AG04450 (cell line): ENCODE measurements at regions of chr7 and their contacts with region 1.

Region 1: GRCh38 chr7:97027427-97028234 is 3.0 kb upstream of the DLX5 start:
- DNase-seq: peak; percentile 69
- H3K4me3 ChIP-seq: peak overlapping the region; percentile 46
- H3K27ac ChIP-seq: no peak overlapping the region
- H3K27me3 ChIP-seq: peaks cover 48% of the 10 kb centered on the region
- CTCF ChIP-seq: peak; percentile 90

Region 2: GRCh38 chr7:96075510-96076349 is 951.9 kb before region 1 on chr7:
- CTCF ChIA-PET with region 1: interaction called, 24 read pairs
- POLR2A ChIA-PET with region 1: no interaction called
- DNase-seq: peak; percentile 27
- H3K4me3 ChIP-seq: peak overlapping the region; percentile 64
- H3K27ac ChIP-seq: no peak overlapping the region
- H3K27me3 ChIP-seq: peaks cover 2% of the 10 kb centered on the region
- CTCF ChIP-seq: peak; percentile 97

Region 3: DNA sequence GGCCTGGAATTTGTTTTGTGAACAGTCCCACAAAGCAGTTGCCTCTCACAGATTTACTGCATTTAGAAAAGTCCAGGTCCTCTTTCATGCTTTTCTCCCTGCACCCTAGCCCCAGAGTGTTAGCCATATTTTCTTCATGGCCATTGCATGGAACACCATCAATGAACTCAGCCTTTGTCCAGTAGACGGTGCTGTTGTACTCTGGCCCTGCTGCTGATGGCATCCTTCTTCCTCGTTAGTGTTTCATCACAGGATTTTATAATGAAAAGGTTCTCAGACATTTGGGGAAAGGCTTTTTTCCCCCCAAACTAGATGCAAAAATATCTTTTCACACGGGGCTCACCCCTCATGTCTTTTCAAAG is 612.7 kb before region 1 on chr7:
- CTCF ChIA-PET with region 1: interaction called, 14 read pairs
- POLR2A ChIA-PET with region 1: no interaction called
- DNase-seq: no peak
- H3K4me3 ChIP-seq: no peak overlapping the region
- H3K27ac ChIP-seq: no peak overlapping the region
- H3K27me3 ChIP-seq: peaks cover 6% of the 10 kb centered on the region
- CTCF ChIP-seq: peak; percentile 77

Region 4: GRCh38 chr7:97006036-97006815 is 21.4 kb before region 1 on chr7:
- CTCF ChIA-PET with region 1: interaction called, 12 read pairs
- POLR2A ChIA-PET with region 1: interaction called, 7 read pairs
- DNase-seq: no peak
- H3K4me3 ChIP-seq: peak overlapping the region; percentile 7; the same call in 1 of the 2 replicates
- H3K27ac ChIP-seq: no peak overlapping the region
- H3K27me3 ChIP-seq: peaks cover 77% of the 10 kb centered on the region
- CTCF ChIP-seq: no peak